GM12878 (cell line): ENCODE measurements at regions of chr15 and their contacts with region 1.

Region 1: DNA sequence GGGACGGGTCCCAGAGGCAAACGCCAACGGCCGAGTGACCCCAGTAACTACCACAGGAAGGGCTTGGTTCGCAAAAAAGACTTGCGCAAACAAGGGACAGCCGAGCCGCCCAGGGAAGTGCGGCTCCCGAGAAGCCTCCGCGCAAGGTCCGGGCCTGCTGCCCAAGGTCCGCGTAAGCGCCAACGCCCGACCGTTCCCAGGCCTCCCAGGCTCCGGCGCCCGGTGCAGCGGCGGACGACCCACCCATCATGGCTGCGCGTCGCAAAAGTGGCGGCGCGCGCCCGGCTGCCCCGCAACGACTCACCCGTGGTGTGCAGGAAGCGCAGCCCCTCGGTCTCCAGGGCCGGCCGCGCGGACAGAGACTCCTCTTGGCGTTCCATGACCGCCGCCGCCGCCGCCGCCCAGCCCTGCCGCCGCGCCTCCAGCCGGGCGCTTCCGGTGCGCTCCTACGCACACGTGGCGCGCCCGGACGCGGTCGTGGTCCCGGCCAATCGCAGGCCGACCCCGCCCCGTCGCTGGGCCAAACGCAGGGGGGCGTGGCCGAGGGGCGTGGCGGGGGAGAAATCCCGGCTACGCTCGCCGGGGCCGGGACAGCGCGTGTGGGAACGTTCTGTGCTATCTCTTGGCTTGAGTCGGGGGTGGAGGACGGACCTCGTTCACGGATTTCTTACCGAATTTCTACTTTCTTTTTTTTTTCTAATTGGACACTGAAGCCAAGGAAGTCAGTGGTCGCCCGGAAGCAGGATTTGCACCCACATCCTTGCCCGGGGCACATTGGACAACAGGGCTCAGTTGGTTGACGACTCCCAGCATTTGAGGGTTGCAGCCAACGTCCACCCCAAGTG is at the start of gene SELENOS:
- DNase-seq: no peak
- ATAC-seq: peak; percentile 94
- H3K4me3 ChIP-seq: peak within 1 kb of the TSS; percentile 98
- H3K27ac ChIP-seq: peak within 1 kb of the TSS; percentile 71
- H3K4me1 ChIP-seq: peaks cover 10% of the 10 kb centered on the region
- H3K27me3 ChIP-seq: no peaks in the 10 kb centered on the region
- CTCF ChIP-seq: no peak
- EP300 ChIP-seq: no peak
- POLR2A ChIP-seq: peak; percentile 82
- RAD21 ChIP-seq: no peak
- polyA plus RNA-seq, gene SELENOS: 25.8 to 36.7 TPM

Region 2: DNA sequence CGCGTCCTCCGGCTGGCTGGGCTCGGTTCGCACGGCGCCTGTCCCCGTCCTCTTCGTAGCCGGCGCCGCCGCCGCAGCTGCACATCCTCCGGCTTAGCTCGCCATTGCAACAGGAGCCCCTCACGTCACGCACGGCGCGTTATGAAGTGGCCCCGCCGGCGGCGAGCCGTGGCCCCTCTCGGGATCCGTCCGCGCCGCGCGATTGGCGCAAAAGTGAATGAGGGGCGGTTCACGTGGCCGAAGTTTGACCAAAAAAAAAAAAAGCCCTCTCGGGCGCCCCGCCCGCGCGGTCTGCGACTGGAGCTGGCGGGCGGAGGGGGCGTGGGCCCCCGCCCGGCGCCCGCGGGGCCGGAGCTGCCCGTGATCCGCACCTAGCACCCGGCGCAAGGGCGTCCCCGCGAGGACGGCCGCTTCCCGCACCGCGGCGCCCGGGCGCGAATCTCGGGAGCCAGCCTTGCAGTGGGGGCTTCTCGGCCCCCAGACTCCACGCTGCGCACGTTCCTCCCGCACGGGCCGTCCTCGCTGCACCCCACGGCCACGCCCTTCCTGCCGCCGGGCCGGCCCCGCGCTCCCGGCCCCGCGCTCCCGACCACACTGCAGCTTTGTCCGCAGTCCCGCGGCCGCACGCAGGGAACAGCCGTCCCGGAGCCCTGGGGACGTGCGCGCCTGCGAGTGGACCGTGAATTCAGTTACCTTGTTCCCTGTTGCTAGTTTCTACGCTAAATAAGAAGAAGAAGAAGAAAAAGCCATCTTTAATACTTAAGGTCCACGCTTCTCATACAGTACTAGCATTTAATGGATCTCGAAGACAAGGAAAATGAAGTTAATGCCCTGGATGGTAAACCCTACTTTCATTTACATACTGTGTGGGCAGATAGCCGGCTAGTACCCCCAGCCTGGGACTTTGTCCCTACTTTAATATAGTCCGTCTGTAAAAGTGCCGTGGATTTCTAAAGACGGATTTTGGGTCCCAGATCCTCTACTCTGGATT is 25.1 kb before region 1 on chr15 and contains the start of gene CHSY1:
- CTCF ChIA-PET with region 1: interaction called, 3 read pairs
- POLR2A ChIA-PET with region 1: interaction called, 3 read pairs
- RAD21 ChIA-PET with region 1: interaction called, 28 read pairs
- SMC1A ChIA-PET with region 1: interaction called, 5 read pairs
- in situ Hi-C with region 1: no loop called
- intact Hi-C with region 1: no loop called
- DNase-seq: peak; percentile 57
- ATAC-seq: peak; percentile 80
- H3K4me3 ChIP-seq: peak within 1 kb of the TSS; percentile 91
- H3K27ac ChIP-seq: peak within 1 kb of the TSS; percentile 43
- H3K4me1 ChIP-seq: no peaks in the 10 kb centered on the region; the same call in 1 of the 2 replicates
- H3K27me3 ChIP-seq: no peaks in the 10 kb centered on the region
- CTCF ChIP-seq: peak; percentile 17 to 47 (median 17); a peak in 3 of 6 replicates
- EP300 ChIP-seq: no peak
- POLR2A ChIP-seq: peak; percentile 87
- RAD21 ChIP-seq: peak; percentile 50; the same call in 1 of the 2 replicates
- polyA plus RNA-seq, gene CHSY1: 5.1 to 10.0 TPM

Region 3: GRCh38 chr15:101288908-101289513 is 11.8 kb after region 1 on chr15:
- CTCF ChIA-PET with region 1: interaction called, 52 read pairs
- POLR2A ChIA-PET with region 1: interaction called, 21 read pairs
- RAD21 ChIA-PET with region 1: interaction called, 24 read pairs
- SMC1A ChIA-PET with region 1: interaction called, 18 read pairs
- in situ Hi-C with region 1: no loop called
- intact Hi-C with region 1: loop called (anchors 1 kb)
- DNase-seq: no peak
- ATAC-seq: peak; percentile 48
- H3K4me3 ChIP-seq: no peak overlapping the region
- H3K27ac ChIP-seq: no peak overlapping the region
- H3K4me1 ChIP-seq: peaks cover 4% of the 10 kb centered on the region
- H3K27me3 ChIP-seq: no peaks in the 10 kb centered on the region
- CTCF ChIP-seq: peak; percentile 52 to 58 (median 53)
- EP300 ChIP-seq: no peak
- POLR2A ChIP-seq: no peak
- RAD21 ChIP-seq: peak; percentile 45

Region 4: DNA sequence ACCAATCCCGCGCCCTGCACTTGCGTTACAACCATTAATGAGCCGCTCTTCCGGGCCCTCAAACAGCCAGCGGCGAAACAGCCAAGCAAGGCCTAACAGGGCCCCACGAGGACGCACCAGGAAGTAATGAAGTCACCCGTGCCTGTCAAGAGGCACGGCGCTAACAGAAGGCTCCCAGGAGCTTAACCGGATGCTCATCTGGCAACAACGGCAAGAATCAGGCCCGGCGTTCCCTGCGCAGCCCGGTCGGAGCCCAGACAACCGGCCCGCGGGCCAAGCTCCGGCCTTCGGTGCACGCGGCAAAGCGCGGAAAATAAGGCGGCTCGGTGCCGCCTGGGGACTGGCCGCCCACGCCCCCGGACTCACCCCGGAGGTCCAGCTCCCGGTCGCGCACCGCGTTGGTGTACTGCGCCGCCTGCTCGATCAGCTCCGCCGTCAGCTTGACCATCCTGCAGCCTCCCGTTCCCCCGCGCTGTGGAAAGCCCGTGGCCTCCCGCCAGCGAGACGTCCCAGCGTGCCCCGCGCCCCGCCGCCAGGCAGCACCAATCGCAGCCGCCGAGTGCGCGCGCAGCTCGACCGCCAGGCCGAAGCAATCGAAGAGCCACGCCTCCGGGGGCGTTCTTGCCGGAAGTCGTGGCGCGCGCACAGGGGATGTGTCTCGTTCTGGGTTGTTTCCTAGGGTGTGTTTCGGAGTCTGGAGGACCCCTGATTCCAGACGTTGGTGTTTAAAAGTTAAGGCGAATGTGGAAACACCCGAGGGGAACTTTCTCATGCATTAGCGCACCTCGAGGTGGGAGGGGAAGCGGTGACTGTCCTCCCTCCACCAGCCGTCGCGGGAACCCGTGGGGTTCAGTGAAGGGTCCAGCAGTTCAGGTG is 17.7 kb after region 1 on chr15 and contains the start of gene SNRPA1:
- CTCF ChIA-PET with region 1: interaction called, 52 read pairs
- POLR2A ChIA-PET with region 1: interaction called, 21 read pairs
- RAD21 ChIA-PET with region 1: interaction called, 24 read pairs
- SMC1A ChIA-PET with region 1: interaction called, 18 read pairs
- in situ Hi-C with region 1: no loop called
- intact Hi-C with region 1: loop called (anchors 1 kb)
- DNase-seq: peak; percentile 68
- ATAC-seq: peak; percentile 88
- H3K4me3 ChIP-seq: peak within 1 kb of the TSS; percentile 87
- H3K27ac ChIP-seq: peak within 1 kb of the TSS; percentile 95
- H3K4me1 ChIP-seq: peaks cover 8% of the 10 kb centered on the region
- H3K27me3 ChIP-seq: no peaks in the 10 kb centered on the region
- CTCF ChIP-seq: no peak
- EP300 ChIP-seq: 0 out of 4 replicates have a peak, but pooled peaks of 1 of the 2 experiments have one; percentile 7
- POLR2A ChIP-seq: peak; percentile 95
- RAD21 ChIP-seq: no peak
- polyA plus RNA-seq, gene SNRPA1: 174 to 238 TPM

Region 5: GRCh38 chr15:101652098-101652782 is 375.0 kb after region 1 on chr15 and contains the start of gene TM2D3:
- CTCF ChIA-PET with region 1: interaction called, 3 read pairs
- POLR2A ChIA-PET with region 1: interaction called, 4 read pairs
- RAD21 ChIA-PET with region 1: interaction called, 5 read pairs
- SMC1A ChIA-PET with region 1: no interaction called
- in situ Hi-C with region 1: no loop called
- intact Hi-C with region 1: loop called (anchors 5 kb)
- DNase-seq: peak; percentile 65
- ATAC-seq: peak; percentile 94
- H3K4me3 ChIP-seq: peak within 1 kb of the TSS; percentile 85
- H3K27ac ChIP-seq: peak within 1 kb of the TSS; percentile 87
- H3K4me1 ChIP-seq: peaks cover 20% of the 10 kb centered on the region
- H3K27me3 ChIP-seq: no peaks in the 10 kb centered on the region
- CTCF ChIP-seq: peak; percentile 58 to 69 (median 63); a peak in 5 of 6 replicates
- EP300 ChIP-seq: peak in 1 of 2 experiments; percentile 27; a peak in 2 of 4 replicates
- POLR2A ChIP-seq: peak; percentile 98
- RAD21 ChIP-seq: peak; percentile 12; the same call in 1 of the 2 replicates
- polyA plus RNA-seq, gene TM2D3: 48.7 to 71.8 TPM